ENCODE measurements at regions of chrX and their contacts with region 1.

Region 1: DNA sequence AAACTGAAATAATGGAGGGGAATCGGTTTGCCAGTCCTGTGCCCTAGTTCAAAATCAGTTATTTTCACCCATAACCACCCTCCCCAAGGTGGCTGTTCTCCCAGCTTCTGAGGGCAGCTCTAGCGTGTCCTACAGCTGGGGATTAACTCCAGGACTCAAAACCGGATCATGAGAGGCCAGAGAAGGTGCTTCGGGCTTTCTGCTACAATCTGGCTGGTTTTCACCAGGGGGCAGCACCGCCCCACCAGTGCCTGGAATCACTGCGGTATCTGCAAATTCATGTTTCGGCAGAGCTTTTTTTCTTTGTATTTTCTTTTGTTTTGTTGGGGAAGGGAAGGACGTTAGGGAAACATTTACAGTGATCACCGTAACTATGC is 28.4 kb downstream of the PDHA1 start:
- DNase-seq: no peak
- ATAC-seq: peak; percentile 94
- H3K4me3 ChIP-seq: peak overlapping the region; percentile 28; the same call in 1 of the 2 replicates
- H3K27ac ChIP-seq: no peak overlapping the region
- H3K4me1 ChIP-seq: no peaks in the 10 kb centered on the region; the same call in 1 of the 2 replicates
- H3K27me3 ChIP-seq: no peaks in the 10 kb centered on the region
- CTCF ChIP-seq: peak; percentile 67 to 81 (median 69)
- EP300 ChIP-seq: no peak
- POLR2A ChIP-seq: no peak
- RAD21 ChIP-seq: peak; percentile 78

Region 2: GRCh38 chrX:19360903-19361302 is 11.3 kb before region 1 on chrX:
- CTCF ChIA-PET with region 1: interaction called, 12 read pairs
- POLR2A ChIA-PET with region 1: no interaction called
- RAD21 ChIA-PET with region 1: interaction called, 3 read pairs
- SMC1A ChIA-PET with region 1: interaction called, 3 read pairs
- in situ Hi-C with region 1: no loop called
- intact Hi-C with region 1: no loop called
- DNase-seq: no peak
- ATAC-seq: no peak
- H3K4me3 ChIP-seq: no peak overlapping the region
- H3K27ac ChIP-seq: no peak overlapping the region
- H3K4me1 ChIP-seq: no peaks in the 10 kb centered on the region
- H3K27me3 ChIP-seq: no peaks in the 10 kb centered on the region
- CTCF ChIP-seq: no peak
- EP300 ChIP-seq: no peak
- POLR2A ChIP-seq: no peak
- RAD21 ChIP-seq: no peak

Region 3: DNA sequence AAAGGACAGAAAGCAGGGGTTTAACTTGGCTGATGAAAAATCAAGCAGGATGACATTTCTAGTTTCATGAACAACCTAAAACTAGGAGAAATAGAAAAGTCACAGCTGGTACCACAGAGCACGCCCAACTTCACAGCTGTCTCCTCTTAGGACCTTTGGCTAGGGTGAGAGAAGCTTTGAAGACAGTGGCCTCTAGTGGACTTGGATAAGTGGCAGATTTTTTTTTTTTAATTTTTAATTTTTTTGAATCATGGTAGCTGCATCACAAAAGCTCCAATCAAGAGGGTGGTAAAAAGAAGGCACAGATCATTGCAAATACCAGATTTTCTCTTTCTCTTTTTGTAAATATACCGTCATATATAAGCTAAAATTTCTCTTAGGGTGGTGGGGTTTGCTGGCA is 163.3 kb after region 1 on chrX:
- CTCF ChIA-PET with region 1: interaction called, 5 read pairs
- POLR2A ChIA-PET with region 1: no interaction called
- RAD21 ChIA-PET with region 1: interaction called, 7 read pairs
- SMC1A ChIA-PET with region 1: interaction called, 3 read pairs
- in situ Hi-C with region 1: no loop called
- intact Hi-C with region 1: loop called (anchors 5 kb)
- DNase-seq: no peak
- ATAC-seq: peak; percentile 57
- H3K4me3 ChIP-seq: no peak overlapping the region
- H3K27ac ChIP-seq: no peak overlapping the region
- H3K4me1 ChIP-seq: no peaks in the 10 kb centered on the region
- H3K27me3 ChIP-seq: no peaks in the 10 kb centered on the region
- CTCF ChIP-seq: peak in 2 of 3 experiments; percentile 12 to 13; a peak in 1 of 6 replicates
- EP300 ChIP-seq: no peak
- POLR2A ChIP-seq: no peak
- RAD21 ChIP-seq: peak; percentile 30

Region 4: DNA sequence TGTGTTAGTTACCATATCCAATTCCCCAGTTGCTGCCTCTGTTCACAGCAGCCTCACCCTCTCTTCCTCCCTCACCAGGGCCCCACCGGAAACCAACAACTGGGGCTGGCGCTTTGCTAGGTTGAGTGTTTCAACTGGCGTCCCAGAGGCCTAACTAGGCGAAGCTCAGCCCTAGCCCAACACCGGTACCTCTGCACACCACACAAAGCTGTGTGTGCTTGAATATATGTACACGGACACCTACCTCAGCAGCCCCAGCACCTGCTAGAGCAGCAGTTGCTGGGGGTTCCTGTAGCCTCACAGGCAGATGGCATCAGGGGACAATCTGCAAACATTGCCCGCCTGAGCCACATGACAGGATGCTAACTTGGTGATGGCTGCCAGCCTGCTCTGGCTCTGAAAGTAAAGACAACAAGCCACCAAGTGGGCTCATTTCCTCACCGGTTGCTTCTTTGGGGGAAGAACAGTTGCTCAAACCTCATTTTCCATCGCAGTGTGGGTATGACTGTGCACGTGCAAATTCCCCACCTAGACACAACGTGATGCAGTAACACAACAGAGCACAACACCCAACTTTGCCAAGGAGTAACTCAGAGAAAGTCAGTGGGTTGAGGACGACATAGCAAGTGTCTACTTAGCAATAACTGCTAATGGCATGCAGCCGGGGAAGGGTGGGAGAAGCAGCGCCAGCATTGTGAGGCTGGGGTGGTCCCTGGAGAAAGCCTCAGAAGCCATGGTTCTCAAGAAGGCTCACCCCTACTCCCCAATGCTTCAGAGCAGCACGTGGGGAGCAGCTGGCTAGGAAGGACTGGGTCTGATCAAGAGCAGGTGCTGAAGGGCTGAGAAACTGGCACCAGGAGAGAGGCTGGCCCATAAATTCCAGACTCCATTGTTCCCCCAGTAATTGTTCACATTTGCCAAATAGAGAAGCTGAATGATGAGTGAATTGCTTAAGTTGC is 375.8 kb after region 1 on chrX:
- CTCF ChIA-PET with region 1: no interaction called
- POLR2A ChIA-PET with region 1: no interaction called
- RAD21 ChIA-PET with region 1: no interaction called
- SMC1A ChIA-PET with region 1: no interaction called
- in situ Hi-C with region 1: no loop called
- intact Hi-C with region 1: no loop called
- DNase-seq: no peak
- ATAC-seq: peak; percentile 48
- H3K4me3 ChIP-seq: no peak overlapping the region
- H3K27ac ChIP-seq: peak overlapping the region; percentile 91
- H3K4me1 ChIP-seq: peaks cover 59% of the 10 kb centered on the region
- H3K27me3 ChIP-seq: no peaks in the 10 kb centered on the region
- CTCF ChIP-seq: no peak
- EP300 ChIP-seq: peak in 1 of 2 experiments; percentile 33; a peak in 1 of 4 replicates
- POLR2A ChIP-seq: no peak
- RAD21 ChIP-seq: no peak

Region 5: DNA sequence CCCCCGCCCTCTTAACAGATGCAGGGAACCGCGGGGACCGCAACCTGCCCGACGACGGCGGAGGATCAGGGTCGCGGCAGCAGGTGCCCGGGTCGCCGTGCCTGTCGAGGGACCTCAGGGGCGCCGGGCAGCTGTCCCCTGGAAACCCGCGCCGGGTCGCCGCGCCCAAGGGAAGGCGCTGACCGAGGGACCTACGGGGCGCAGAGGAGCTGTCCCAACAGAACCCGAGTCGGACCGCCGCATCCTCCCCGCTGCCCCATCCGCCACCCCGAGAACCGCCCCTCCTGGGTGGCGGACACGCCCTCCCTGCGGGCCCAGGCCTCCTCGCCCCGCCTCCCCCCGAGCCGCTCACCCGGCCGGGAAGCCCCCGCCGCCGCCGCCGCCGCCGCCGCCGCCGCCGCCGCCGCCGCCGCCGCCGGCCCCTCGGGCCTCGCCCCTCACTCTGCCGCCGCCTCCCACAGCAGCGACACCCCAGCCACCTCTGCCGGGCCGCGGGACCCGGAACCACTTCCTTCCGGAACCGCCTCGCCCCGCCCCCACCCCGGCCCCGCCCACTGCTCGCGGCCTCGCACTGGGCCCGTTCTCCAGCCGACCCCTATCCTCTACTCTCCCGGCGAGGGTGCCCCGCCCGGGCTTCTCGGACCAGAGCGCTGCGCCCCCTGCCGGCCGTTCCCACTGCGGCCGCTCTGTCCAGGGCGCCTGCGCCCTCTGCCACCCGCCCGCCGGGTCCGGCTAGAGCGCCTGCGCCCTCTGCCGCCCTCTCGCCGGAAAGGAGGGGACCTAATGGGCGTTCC is 618.6 kb after region 1 on chrX and contains the start of gene BCLAF3:
- CTCF ChIA-PET with region 1: interaction called, 4 read pairs
- POLR2A ChIA-PET with region 1: no interaction called
- RAD21 ChIA-PET with region 1: no interaction called
- SMC1A ChIA-PET with region 1: no interaction called
- in situ Hi-C with region 1: no loop called
- intact Hi-C with region 1: loop called (anchors 5 kb)
- DNase-seq: peak; percentile 30
- ATAC-seq: peak; percentile 94
- H3K4me3 ChIP-seq: peak within 1 kb of the TSS; percentile 67
- H3K27ac ChIP-seq: no peak within 1 kb of the TSS
- H3K4me1 ChIP-seq: no peaks in the 10 kb centered on the region
- H3K27me3 ChIP-seq: no peaks in the 10 kb centered on the region
- CTCF ChIP-seq: peak; percentile 64 to 82 (median 65); a peak in 5 of 6 replicates
- EP300 ChIP-seq: no peak
- POLR2A ChIP-seq: peak; percentile 56; the same call in 1 of the 2 replicates
- RAD21 ChIP-seq: peak; percentile 73
- polyA plus RNA-seq, gene BCLAF3: 1.1 to 1.5 TPM